Heart right ventricle (tissue), 16 donors: ENCODE measurements at regions of chr1 and their contacts with region 1.

Region 1: DNA sequence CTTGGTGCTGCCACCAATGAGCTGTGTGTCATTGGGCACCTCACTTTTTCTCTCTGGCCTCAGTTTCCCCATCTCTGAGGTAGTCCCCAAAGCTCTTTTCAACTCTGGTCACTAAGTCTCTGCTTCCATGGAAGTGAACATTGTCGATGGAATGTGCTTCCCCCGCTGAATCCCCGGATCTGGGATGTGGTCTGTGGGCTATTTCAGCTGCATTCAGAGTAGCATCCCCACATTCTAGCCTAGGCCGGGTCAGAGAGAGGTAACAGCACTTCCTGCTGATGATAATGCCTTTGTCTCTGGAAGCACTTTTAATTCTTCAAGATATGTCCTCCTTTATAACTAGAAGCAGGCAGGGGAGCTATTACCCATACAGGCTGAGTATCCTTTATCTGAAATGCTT is 29.8 kb downstream of the RASSF5 start:
- DNase-seq: no peak
- ATAC-seq: no peak
- H3K4me3 ChIP-seq: no peak overlapping the region
- H3K27ac ChIP-seq: no peak overlapping the region
- H3K4me1 ChIP-seq: peaks cover 0 to 17% (median 10%) of the 10 kb centered on the region in 9 donors
- H3K27me3 ChIP-seq: peaks cover 0 to 4% (median 0%) of the 10 kb centered on the region in 7 donors
- CTCF ChIP-seq: no peak

Region 2: DNA sequence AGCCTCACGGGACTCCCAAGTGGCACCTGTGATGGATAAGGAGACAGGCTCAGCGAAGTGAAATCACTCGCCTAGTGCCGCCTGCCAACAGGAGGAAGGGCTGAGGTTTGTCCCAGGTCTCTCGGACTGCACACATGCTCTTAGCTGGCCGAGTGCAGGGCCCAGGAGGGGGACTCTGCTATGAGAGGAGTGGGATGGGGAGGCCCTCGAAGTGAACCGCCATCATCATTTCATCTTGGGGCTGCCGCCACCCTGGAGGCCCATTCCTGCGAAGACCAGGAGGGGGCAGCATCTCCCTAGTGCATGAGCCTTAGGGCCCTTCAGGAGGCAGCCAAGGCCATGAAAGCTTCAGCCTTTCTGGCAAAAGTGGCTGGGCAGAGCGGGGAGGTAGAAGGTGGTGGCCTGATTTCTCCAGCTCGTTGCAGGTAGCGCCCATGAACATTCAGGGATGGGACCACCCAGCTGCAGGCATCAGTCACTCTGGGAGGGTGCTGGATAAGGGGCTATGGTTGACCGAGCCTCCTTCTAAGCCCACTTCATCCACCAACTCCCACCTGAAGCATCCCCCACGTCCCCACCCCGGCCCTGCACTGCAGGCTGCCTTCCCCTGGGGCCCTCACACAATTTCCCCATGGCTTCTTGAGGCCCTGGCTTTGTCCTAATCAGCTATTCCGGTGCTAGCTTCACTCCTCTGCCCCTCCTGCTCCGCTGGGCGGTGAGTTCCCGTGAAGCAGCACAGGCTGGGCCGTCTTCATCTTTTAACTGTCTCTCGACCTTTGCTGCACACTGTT is 47.0 kb before region 1 on chr1:
- intact Hi-C with region 1: loop called in 6 of 10 experiments (anchors 2 to 5 kb)
- DNase-seq: peak; percentile 74 to 76
- ATAC-seq: peak; percentile 80 to 91 (median 84)
- H3K4me3 ChIP-seq: no peak overlapping the region
- H3K27ac ChIP-seq: no peak overlapping the region
- H3K4me1 ChIP-seq: peaks cover 0 to 26% (median 20%) of the 10 kb centered on the region in 9 donors
- H3K27me3 ChIP-seq: no peaks in the 10 kb centered on the region
- CTCF ChIP-seq: peak; percentile 85 to 98 (median 94)

Region 3: GRCh38 chr1:206507284-206508129 is 29.6 kb before region 1 on chr1 and contains the start of gene RASSF5:
- intact Hi-C with region 1: no loop called
- DNase-seq: peak; percentile 83
- ATAC-seq: peak; percentile 82 to 89 (median 86)
- H3K4me3 ChIP-seq: peak within 1 kb of the TSS; percentile 31 to 77 (median 66)
- H3K27ac ChIP-seq: peak within 1 kb of the TSS in 3 of 10 donors; percentile 10 to 69 (median 28)
- H3K4me1 ChIP-seq: peaks cover 0 to 73% (median 37%) of the 10 kb centered on the region in 9 donors
- H3K27me3 ChIP-seq: peaks cover 0 to 59% (median 12%) of the 10 kb centered on the region in 7 donors
- CTCF ChIP-seq: no peak
- total RNA-seq, gene RASSF5: 5.0 to 26.0 (median 7.0) TPM

Region 4: DNA sequence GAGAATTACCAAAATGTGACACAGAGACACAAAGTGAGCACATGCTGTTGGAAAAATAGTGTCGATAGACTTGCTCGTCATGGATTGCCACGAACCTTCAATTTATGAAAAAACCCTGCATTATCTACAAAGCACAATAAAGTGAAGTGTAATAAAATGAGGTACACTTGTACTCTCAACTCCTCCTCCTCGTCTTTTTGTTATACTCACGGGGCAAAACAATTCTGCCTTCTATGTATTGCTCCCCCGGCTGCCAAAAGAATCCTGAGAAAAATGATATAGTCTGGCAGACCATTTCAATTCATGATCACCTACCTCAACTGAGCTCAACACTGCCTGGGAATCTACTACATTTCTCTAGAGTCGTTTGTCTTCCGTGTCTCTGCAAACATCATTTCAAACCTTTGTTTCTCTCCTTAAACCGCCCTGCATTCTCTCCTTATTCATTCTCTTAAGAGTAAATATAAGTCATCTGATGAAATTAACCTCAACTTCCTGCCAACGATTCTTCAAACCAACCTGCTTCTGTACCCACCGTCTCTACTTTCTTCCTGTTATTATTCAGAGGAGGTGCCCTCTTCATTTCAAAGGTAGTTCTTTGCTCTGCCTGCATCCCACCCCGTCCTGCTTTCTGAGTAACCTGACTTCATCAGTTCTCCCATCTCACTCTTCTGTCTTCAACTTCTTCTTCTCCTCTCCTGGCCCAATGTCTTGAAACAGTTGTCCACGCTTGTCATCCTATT is 220.6 kb after region 1 on chr1:
- intact Hi-C with region 1: loop called in 1 of 10 experiments (anchors 5 kb)
- DNase-seq: no peak
- ATAC-seq: no peak
- H3K4me3 ChIP-seq: no peak overlapping the region
- H3K27ac ChIP-seq: peak overlapping the region in 1 of 10 donors; percentile 75
- H3K4me1 ChIP-seq: peaks cover 0 to 10% (median 0%) of the 10 kb centered on the region in 9 donors
- H3K27me3 ChIP-seq: peaks cover 0 to 6% (median 0%) of the 10 kb centered on the region in 7 donors
- CTCF ChIP-seq: no peak